Calu3 (cell line): ENCODE measurements at regions of chr6 and their contacts with region 1.

Region 1: DNA sequence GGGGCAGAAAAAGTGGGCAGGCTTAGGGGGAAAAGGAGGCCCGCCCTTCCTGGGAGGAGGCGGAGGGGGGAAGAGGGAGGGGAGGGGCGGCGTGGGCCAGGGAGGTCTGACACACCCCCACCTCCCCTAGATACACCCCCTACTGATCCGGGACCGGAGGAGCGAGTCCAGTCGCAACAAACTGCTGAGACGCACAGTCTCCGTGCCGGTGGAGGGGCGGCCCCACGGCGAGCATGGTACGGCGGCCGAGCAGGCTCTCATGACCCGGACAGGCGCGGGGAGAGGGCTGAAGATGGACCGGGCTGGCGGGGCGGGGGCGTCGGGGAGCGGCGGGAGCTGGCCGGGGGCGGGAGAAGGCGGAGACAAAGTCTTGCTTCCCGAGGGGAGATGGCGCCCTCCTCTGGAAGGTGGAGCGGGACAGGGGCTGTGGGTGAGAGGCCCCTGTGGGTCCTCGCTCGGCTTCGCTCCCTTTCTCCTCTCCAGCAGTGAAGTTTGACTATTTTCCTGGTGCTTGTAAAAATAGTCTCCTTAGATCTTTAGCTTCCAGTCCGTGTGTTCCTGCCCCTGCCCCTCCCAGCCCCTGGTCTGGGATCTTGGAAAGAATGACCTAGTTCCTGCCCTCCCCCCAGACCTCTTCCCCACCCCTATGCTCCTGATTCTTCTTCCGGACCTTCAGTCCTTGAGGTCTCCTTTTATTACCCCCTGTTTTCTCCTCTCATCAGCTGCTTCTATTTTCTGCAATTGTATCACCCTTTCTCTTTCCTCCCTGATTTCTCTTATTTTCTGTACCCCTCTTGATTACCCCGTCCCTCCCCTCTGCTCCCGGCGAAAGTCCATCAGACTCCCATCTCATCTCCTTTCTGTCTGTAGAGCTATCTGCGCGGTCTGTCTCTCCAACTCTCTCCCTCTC is 6.1 kb downstream of the SYNGAP1 start:
- DNase-seq: peak; percentile 95
- H3K4me3 Mint-ChIP-seq: peak overlapping the region; percentile 87
- H3K27ac Mint-ChIP-seq: peak overlapping the region; percentile 64
- H3K4me1 Mint-ChIP-seq: peaks cover 49% of the 10 kb centered on the region
- H3K27me3 Mint-ChIP-seq: peaks cover 28% of the 10 kb centered on the region
- CTCF ChIP-seq: peak; percentile 76

Region 2: DNA sequence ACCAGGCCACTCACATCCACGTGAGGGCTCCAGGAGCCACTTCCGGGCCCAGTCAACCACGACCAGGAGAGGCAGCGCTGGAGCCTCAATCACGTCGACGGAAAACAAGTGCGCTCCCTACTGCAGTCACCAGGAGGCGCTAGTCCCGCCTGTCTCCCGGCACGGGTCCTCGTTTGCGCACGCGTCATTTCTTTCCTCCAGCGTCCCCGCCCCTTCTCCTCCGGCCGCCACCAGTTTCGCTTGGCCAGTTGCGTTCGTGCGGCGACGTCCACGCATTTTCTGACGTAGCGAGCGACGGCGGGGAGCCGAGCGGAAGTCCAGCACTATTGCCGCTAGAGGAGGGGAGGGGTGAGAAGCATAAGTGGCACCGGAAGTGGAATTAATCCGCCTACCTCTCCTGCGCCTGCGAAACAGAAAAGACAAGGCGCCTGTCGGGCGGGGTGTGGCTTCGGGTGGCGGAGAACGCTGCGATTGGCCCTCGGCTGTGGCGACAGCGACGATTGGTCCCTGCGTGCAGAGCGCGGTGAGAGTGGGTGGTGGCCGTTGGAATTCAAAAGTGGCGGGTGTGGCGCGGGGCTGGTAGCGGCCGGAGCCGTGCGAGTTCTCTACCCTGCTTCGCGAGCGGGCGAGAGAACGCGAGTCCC is 34.5 kb before region 1 on chr6 and contains the start of gene KIFC1:
- CTCF ChIA-PET with region 1: interaction called, 7 read pairs
- intact Hi-C with region 1: loop called (anchors 5 kb)
- DNase-seq: peak; percentile 100
- H3K4me3 Mint-ChIP-seq: peak within 1 kb of the TSS; percentile 86
- H3K27ac Mint-ChIP-seq: peak within 1 kb of the TSS; percentile 96
- H3K4me1 Mint-ChIP-seq: peaks cover 41% of the 10 kb centered on the region
- H3K27me3 Mint-ChIP-seq: no peaks in the 10 kb centered on the region
- CTCF ChIP-seq: peak; percentile 97
- total RNA-seq, gene KIFC1: 105 and 140 TPM in 2 replicates

Region 3: GRCh38 chr6:33404836-33405235 is 21.1 kb before region 1 on chr6:
- CTCF ChIA-PET with region 1: no interaction called
- intact Hi-C with region 1: no loop called
- DNase-seq: no peak
- H3K4me3 Mint-ChIP-seq: no peak overlapping the region
- H3K27ac Mint-ChIP-seq: no peak overlapping the region
- H3K4me1 Mint-ChIP-seq: peaks cover 9% of the 10 kb centered on the region
- H3K27me3 Mint-ChIP-seq: no peaks in the 10 kb centered on the region
- CTCF ChIP-seq: no peak

Region 4: GRCh38 chr6:33535104-33535603 is 109.2 kb after region 1 on chr6:
- CTCF ChIA-PET with region 1: no interaction called
- intact Hi-C with region 1: no loop called
- DNase-seq: no peak
- H3K4me3 Mint-ChIP-seq: no peak overlapping the region
- H3K27ac Mint-ChIP-seq: no peak overlapping the region
- H3K4me1 Mint-ChIP-seq: no peaks in the 10 kb centered on the region
- H3K27me3 Mint-ChIP-seq: peaks cover 29% of the 10 kb centered on the region
- CTCF ChIP-seq: no peak